Naive thymus-derived CD4-positive, alpha-beta T cell (primary cell): ENCODE measurements at regions of chr9 and their contacts with region 1.

Region 1: DNA sequence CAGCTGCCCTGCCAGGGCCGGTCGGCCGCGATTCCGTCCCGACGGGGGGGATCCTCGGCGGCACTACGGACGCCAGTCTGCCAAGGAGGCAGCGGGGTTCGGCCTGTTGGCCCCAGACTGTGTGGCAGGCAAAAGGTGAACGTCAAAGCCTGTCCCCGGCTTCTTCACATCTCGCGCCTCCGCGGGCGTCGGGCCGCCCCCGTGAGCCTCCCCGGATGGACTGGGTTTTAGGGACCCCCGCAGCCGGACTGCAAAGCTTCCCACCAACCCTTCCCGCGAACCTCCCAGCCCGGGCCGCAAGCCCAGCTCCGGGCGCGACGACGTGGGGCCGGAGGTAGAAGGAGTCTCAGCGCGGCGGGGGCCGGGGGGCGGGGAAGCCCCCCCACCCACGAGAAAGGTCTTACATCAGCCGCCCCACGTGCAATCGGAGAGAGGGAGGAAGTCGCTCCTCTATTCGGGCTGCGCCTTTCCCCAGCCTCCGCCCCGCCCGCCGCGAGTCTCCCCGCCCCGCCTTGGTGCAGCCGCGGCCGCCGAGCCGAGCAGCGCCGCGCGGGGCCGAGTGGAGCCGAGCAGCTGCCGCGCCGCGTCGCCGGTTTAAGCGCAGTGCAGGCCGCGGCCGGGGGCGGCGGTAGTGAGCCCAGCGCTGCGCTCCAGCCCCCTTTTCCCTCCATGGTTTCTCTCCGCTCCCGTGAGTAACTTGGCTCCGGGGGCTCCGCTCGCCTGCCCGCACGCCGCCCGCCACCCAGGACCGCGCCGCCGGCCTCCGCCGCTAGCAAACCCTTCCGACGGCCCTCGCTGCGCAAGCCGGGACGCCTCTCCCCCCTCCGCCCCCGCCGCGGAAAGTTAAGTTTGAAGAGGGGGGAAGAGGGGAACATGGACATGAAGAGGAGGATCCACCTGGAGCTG is at the start of gene ANP32B:
- DNase-seq: peak; percentile 94 to 97 (median 96)
- ATAC-seq: peak; percentile 90
- H3K4me3 ChIP-seq: peak within 1 kb of the TSS; percentile 85
- H3K4me3 Mint-ChIP-seq: peak within 1 kb of the TSS; percentile 79 to 92 (median 86)
- H3K27ac ChIP-seq: peak within 1 kb of the TSS; percentile 98
- H3K27ac Mint-ChIP-seq: peak within 1 kb of the TSS; percentile 25 to 94 (median 85)
- H3K4me1 ChIP-seq: peaks cover 30 to 51% of the 10 kb centered on the region in 2 donors
- H3K4me1 Mint-ChIP-seq: peaks cover 48 to 70% (median 63%) of the 10 kb centered on the region in 7 donors
- H3K27me3 ChIP-seq: no peaks in the 10 kb centered on the region
- H3K27me3 Mint-ChIP-seq: no peaks in the 10 kb centered on the region
- total RNA-seq, gene ANP32B: 143 to 267 (median 186) TPM

Region 2: DNA sequence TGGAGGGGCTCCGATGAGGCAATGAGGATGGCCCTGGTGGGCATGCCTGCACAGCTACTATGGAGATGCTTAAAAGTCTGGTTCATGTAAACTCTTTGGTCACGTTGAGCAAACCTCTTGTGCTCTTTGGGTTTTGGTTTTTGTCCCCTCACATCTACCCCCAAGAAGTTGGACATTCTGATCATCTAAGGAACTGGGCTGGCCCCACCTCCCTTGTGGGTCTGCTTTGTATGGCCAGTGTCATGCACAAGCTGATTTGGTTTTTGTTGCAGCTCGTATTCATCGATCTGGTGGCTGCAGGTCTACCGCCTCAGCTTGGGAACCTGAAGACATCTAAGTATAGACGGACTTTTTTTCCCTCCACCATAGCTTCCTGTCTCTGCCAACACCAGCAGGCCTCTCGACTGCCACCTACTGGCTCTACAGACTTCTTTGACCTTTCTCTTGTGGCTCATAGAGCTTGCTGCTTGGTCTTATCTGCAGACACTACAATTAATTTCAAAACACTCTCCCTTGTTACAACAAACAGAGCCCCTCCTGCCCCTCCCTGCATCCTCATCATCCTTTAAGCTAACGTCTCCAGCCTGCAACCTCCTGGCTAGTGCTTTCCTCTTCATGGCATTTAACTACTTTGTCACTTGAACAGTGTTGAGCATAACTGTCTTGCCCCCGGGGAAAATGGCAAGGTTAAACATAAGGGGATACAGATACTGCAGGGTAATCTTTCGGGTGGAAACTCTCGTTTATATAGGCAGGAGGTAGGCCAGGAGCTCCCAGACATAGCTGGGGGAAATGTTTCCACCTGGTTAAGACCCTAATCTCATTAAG is 384.3 kb before region 1 on chr9:
- CTCF ChIA-PET with region 1: no interaction called
- POLR2A ChIA-PET with region 1: no interaction called
- intact Hi-C with region 1: no loop called
- DNase-seq: peak; percentile 26 to 73 (median 67)
- ATAC-seq: peak; percentile 93
- H3K4me3 ChIP-seq: no peak overlapping the region
- H3K4me3 Mint-ChIP-seq: peak overlapping the region in 9 of 10 donors; percentile 19 to 73 (median 60)
- H3K27ac ChIP-seq: no peak overlapping the region
- H3K27ac Mint-ChIP-seq: peak overlapping the region in 4 of 9 donors; percentile 4 to 49 (median 20)
- H3K4me1 ChIP-seq: peaks cover 4% of the 10 kb centered on the region in 2 donors
- H3K4me1 Mint-ChIP-seq: peaks cover 6 to 8% (median 6%) of the 10 kb centered on the region in 7 donors
- H3K27me3 ChIP-seq: no peaks in the 10 kb centered on the region
- H3K27me3 Mint-ChIP-seq: peaks cover 0 to 2% (median 0%) of the 10 kb centered on the region in 5 donors

Region 3: GRCh38 chr9:97696803-97697601 is 285.9 kb before region 1 on chr9 and contains the start of gene XPA:
- CTCF ChIA-PET with region 1: no interaction called
- POLR2A ChIA-PET with region 1: interaction called, 4 read pairs
- intact Hi-C with region 1: loop called (anchors 1 to 2 kb)
- DNase-seq: peak; percentile 95 to 98 (median 96)
- ATAC-seq: peak; percentile 97
- H3K4me3 ChIP-seq: peak within 1 kb of the TSS; percentile 68
- H3K4me3 Mint-ChIP-seq: peak within 1 kb of the TSS; percentile 87 to 96 (median 90)
- H3K27ac ChIP-seq: peak within 1 kb of the TSS; percentile 85
- H3K27ac Mint-ChIP-seq: peak within 1 kb of the TSS; percentile 85 to 98 (median 93)
- H3K4me1 ChIP-seq: peaks cover 32 to 38% of the 10 kb centered on the region in 2 donors
- H3K4me1 Mint-ChIP-seq: peaks cover 53 to 70% (median 65%) of the 10 kb centered on the region in 7 donors
- H3K27me3 ChIP-seq: no peaks in the 10 kb centered on the region
- H3K27me3 Mint-ChIP-seq: peaks cover 0 to 8% (median 0%) of the 10 kb centered on the region in 5 donors
- total RNA-seq, gene XPA: 16.7 to 30.3 (median 23.2) TPM

Region 4: GRCh38 chr9:97938081-97938644 is 44.8 kb before region 1 on chr9 and contains the start of gene HEMGN:
- CTCF ChIA-PET with region 1: interaction called, 4 read pairs
- POLR2A ChIA-PET with region 1: interaction called, 14 read pairs
- intact Hi-C with region 1: no loop called
- DNase-seq: peak in 7 of 9 donors; percentile 38 to 74 (median 67)
- ATAC-seq: peak; percentile 97
- H3K4me3 ChIP-seq: peak within 1 kb of the TSS; percentile 10
- H3K4me3 Mint-ChIP-seq: peak within 1 kb of the TSS; percentile 40 to 81 (median 62)
- H3K27ac ChIP-seq: peak within 1 kb of the TSS; percentile 67
- H3K27ac Mint-ChIP-seq: peak within 1 kb of the TSS; percentile 82 to 94 (median 90)
- H3K4me1 ChIP-seq: peaks cover 18 to 48% of the 10 kb centered on the region in 2 donors
- H3K4me1 Mint-ChIP-seq: peaks cover 18 to 63% (median 58%) of the 10 kb centered on the region in 7 donors
- H3K27me3 ChIP-seq: no peaks in the 10 kb centered on the region
- H3K27me3 Mint-ChIP-seq: peaks cover 0 to 13% (median 0%) of the 10 kb centered on the region in 5 donors
- total RNA-seq, gene HEMGN: 1.3 to 4.3 (median 2.3) TPM

Region 5: GRCh38 chr9:97997330-97998276 is 14.7 kb after region 1 on chr9:
- CTCF ChIA-PET with region 1: interaction called, 6 read pairs
- POLR2A ChIA-PET with region 1: interaction called, 11 read pairs
- intact Hi-C with region 1: loop called in 1 of 2 experiments (anchors 1 kb)
- DNase-seq: no peak
- ATAC-seq: no peak
- H3K4me3 ChIP-seq: no peak overlapping the region
- H3K4me3 Mint-ChIP-seq: no peak overlapping the region
- H3K27ac ChIP-seq: no peak overlapping the region
- H3K27ac Mint-ChIP-seq: peak overlapping the region in 4 of 9 donors; percentile 4 to 77 (median 46)
- H3K4me1 ChIP-seq: peaks cover 9 to 23% of the 10 kb centered on the region in 2 donors
- H3K4me1 Mint-ChIP-seq: peaks cover 14 to 82% (median 68%) of the 10 kb centered on the region in 7 donors
- H3K27me3 ChIP-seq: no peaks in the 10 kb centered on the region
- H3K27me3 Mint-ChIP-seq: no peaks in the 10 kb centered on the region

Region 6: DNA sequence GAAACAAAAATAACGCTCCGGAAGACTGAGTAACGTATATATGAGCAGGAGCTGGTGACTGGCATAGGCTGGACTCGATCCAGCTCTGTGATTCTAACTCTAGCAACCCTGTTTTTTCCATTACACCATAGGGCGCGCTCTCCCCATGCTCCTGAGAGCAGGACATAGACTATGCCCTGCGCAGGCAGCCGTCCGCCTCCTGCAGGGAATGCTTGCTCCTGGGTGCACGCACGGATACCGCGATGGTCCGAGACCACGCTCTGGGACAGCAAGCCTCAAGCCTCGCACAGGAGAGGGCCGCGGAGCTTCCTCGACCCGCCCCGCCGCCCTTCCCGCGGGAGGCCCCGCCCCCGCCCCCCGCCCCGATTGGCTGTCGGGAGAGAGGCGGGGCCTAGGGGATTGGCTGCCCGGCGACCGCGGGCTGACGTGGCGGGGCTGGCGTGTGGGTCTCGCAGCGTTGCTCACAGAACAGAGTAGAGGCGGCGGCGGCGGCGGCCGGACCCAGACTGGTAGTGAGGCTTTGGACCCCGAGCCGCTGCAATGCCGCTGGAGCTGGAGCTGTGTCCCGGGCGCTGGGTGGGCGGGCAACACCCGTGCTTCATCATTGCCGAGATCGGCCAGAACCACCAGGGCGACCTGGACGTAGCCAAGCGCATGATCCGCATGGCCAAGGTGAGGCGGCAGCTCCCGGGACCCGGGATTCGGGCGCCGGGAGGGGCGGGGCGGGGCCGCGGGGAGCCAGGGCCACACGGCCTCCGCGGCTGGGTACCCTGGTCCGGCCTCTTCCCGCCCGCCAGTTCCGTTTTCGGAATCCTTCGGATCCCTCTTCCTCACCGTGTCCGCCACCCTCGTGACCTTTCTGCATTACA is 73.6 kb after region 1 on chr9 and contains the start of gene NANS:
- CTCF ChIA-PET with region 1: no interaction called
- POLR2A ChIA-PET with region 1: interaction called, 14 read pairs
- intact Hi-C with region 1: loop called (anchors 1 kb)
- DNase-seq: peak; percentile 84 to 93 (median 91)
- ATAC-seq: peak; percentile 99
- H3K4me3 ChIP-seq: peak within 1 kb of the TSS; percentile 73
- H3K4me3 Mint-ChIP-seq: peak within 1 kb of the TSS; percentile 93 to 100 (median 95)
- H3K27ac ChIP-seq: peak within 1 kb of the TSS; percentile 93
- H3K27ac Mint-ChIP-seq: peak within 1 kb of the TSS; percentile 93 to 100 (median 97)
- H3K4me1 ChIP-seq: peaks cover 9 to 22% of the 10 kb centered on the region in 2 donors
- H3K4me1 Mint-ChIP-seq: peaks cover 6 to 40% (median 27%) of the 10 kb centered on the region in 7 donors
- H3K27me3 ChIP-seq: no peaks in the 10 kb centered on the region
- H3K27me3 Mint-ChIP-seq: no peaks in the 10 kb centered on the region
- total RNA-seq, gene NANS: 16.3 to 58.9 (median 51.8) TPM

Region 7: DNA sequence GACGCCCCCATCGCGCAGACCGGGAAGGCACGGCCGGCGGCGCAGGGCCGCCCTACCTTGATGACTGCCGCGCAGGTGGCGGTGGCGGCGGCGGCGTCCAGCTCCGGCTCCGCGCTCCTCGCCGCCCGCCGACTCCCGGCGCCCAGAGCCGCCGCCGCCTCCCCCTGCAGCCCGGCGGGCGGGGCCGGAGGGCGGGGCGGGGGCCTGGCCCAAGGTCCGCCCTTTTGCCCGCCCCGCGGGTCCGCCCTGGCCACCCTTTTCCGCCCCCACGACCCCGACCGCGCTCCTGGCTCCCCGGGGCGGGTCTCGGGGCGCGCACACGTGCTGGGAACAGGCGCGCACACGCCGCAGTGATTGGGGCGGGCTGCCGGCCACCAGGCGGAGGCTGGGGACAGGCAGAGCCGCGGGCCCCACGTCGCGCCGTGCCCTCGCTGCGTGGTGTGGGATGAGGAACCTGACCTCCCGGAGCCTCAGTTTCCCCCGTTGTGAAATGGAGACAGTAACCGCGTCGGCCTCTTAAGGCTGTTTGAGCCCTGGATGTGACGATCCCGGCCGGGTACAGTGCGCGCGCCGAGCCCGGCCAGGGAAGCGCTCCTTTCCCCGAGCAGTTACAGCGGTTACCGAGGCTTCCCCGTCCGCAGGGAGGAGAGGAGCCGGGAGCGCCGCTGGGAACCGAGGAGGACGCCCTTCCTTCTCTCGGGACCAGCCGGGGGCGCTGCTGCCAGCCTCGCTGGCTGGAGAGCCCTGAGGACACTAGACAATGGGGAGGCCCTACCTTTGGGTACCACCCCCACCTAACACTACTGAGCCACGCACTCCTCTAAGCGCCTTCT is 209.8 kb after region 1 on chr9 and contains the start of gene CORO2A:
- CTCF ChIA-PET with region 1: no interaction called
- POLR2A ChIA-PET with region 1: no interaction called
- intact Hi-C with region 1: loop called in 1 of 2 experiments (anchors 5 kb)
- DNase-seq: peak; percentile 37 to 85 (median 47)
- ATAC-seq: peak; percentile 86
- H3K4me3 ChIP-seq: peak within 1 kb of the TSS; percentile 81
- H3K4me3 Mint-ChIP-seq: peak within 1 kb of the TSS; percentile 76 to 92 (median 86)
- H3K27ac ChIP-seq: peak within 1 kb of the TSS; percentile 53
- H3K27ac Mint-ChIP-seq: peak within 1 kb of the TSS; percentile 19 to 90 (median 83)
- H3K4me1 ChIP-seq: peaks cover 17 to 22% of the 10 kb centered on the region in 2 donors
- H3K4me1 Mint-ChIP-seq: peaks cover 12 to 46% (median 41%) of the 10 kb centered on the region in 7 donors
- H3K27me3 ChIP-seq: no peaks in the 10 kb centered on the region
- H3K27me3 Mint-ChIP-seq: peaks cover 0 to 17% (median 0%) of the 10 kb centered on the region in 5 donors
- total RNA-seq, gene CORO2A: 3.0 to 9.7 (median 7.7) TPM